SK-N-SH (cell line): ENCODE measurements at regions of chr11 and their contacts with region 1.

Region 1: GRCh38 chr11:123628936-123629683 is 25.3 kb downstream of the SCN3B start:
- DNase-seq: peak; percentile 74
- H3K4me3 ChIP-seq: no peak overlapping the region
- H3K27ac ChIP-seq: peak overlapping the region; percentile 43 to 85; a peak in 3 of 4 replicates
- H3K4me1 ChIP-seq: peaks cover 4 to 12% of the 10 kb centered on the region in 2 experiments; a peak in 2 of 4 replicates
- H3K27me3 ChIP-seq: no peaks in the 10 kb centered on the region
- CTCF ChIP-seq: no peak
- EP300 ChIP-seq: peak; percentile 23 to 28; a peak in 1 of 4 replicates
- RAD21 ChIP-seq: peak; percentile 21

Region 2: GRCh38 chr11:123640677-123641494 is 11.8 kb after region 1 on chr11:
- CTCF ChIA-PET with region 1: interaction called, 32 read pairs
- POLR2A ChIA-PET with region 1: interaction called, 3 read pairs
- DNase-seq: peak; percentile 81
- H3K4me3 ChIP-seq: no peak overlapping the region
- H3K27ac ChIP-seq: no peak overlapping the region
- H3K4me1 ChIP-seq: peaks cover 0 to 8% of the 10 kb centered on the region in 2 experiments; a peak in 1 of 4 replicates
- H3K27me3 ChIP-seq: peaks cover 6% of the 10 kb centered on the region; the same call in 1 of the 2 replicates
- CTCF ChIP-seq: peak; percentile 85
- EP300 ChIP-seq: no peak
- RAD21 ChIP-seq: peak; percentile 92